ENCODE measurements at regions of chrX and their contacts with region 1.

Region 1: GRCh38 chrX:24169211-24169610 is 19.7 kb downstream of the ZFX start:
- DNase-seq: no peak
- ATAC-seq: peak; percentile 90
- H3K4me3 Mint-ChIP-seq: peak overlapping the region; percentile 45
- H3K27ac Mint-ChIP-seq: peak overlapping the region; percentile 81
- H3K4me1 Mint-ChIP-seq: peaks cover 50% of the 10 kb centered on the region
- H3K27me3 Mint-ChIP-seq: no peaks in the 10 kb centered on the region
- CTCF ChIP-seq: no peak

Region 2: DNA sequence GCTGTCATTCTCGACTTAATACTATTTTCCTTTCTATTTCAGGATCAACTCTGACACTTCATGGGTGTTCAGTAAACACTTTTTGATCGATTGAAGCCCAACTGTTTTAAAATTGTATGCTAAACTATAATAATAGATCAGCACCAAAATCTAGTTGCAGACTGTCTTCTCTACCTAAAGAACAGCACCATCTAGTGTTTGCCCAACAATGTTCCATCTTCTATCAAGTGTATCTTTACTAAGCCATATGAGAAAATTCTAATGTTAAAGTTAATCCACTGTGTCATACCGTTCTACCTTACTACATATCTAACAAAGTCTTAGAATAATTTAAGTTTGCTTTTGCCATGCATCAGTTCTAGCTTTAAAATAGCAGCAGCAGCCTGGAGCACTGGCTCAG is 614.9 kb before region 1 on chrX:
- CTCF ChIA-PET with region 1: no interaction called
- POLR2A ChIA-PET with region 1: no interaction called
- intact Hi-C with region 1: no loop called
- DNase-seq: no peak
- ATAC-seq: no peak
- H3K4me3 Mint-ChIP-seq: no peak overlapping the region
- H3K27ac Mint-ChIP-seq: no peak overlapping the region
- H3K4me1 Mint-ChIP-seq: no peaks in the 10 kb centered on the region
- H3K27me3 Mint-ChIP-seq: no peaks in the 10 kb centered on the region
- CTCF ChIP-seq: no peak

Region 3: DNA sequence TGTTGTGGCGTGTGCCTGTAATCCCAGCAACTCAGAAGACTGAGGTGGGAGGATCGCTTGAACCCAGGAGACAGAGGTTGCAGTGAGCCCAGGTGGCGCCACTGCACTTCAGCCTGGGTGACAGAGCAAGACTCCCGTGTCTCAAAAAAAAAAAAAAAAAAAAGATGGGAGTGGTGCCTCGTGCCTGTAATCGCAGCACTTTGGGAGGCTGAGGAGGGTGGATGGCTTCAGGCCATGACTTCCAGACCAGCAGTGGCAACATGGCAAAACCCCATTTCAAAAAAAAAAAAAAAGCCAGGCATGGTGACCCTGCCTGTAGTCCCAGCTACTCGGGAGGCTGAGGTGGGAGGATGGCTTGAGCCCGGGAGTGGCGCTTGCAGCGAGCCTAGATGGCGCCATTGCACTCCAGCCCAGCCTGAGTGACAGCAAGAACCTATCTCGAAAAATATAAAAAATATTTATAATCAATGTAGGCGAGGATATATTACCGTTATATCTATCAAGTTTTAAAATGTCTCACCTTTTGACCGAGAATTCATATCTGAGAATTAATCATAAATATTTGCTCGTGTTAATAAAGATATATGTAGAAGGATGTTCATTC is 87.4 kb before region 1 on chrX:
- CTCF ChIA-PET with region 1: no interaction called
- POLR2A ChIA-PET with region 1: no interaction called
- intact Hi-C with region 1: loop called (anchors 5 kb)
- DNase-seq: peak; percentile 14
- ATAC-seq: peak; percentile 65
- H3K4me3 Mint-ChIP-seq: no peak overlapping the region
- H3K27ac Mint-ChIP-seq: no peak overlapping the region
- H3K4me1 Mint-ChIP-seq: peaks cover 3% of the 10 kb centered on the region
- H3K27me3 Mint-ChIP-seq: no peaks in the 10 kb centered on the region
- CTCF ChIP-seq: no peak

Region 4: GRCh38 chrX:24110069-24110468 is 59.1 kb before region 1 on chrX:
- CTCF ChIA-PET with region 1: no interaction called
- POLR2A ChIA-PET with region 1: no interaction called
- intact Hi-C with region 1: no loop called
- DNase-seq: no peak
- ATAC-seq: no peak
- H3K4me3 Mint-ChIP-seq: no peak overlapping the region
- H3K27ac Mint-ChIP-seq: no peak overlapping the region
- H3K4me1 Mint-ChIP-seq: no peaks in the 10 kb centered on the region
- H3K27me3 Mint-ChIP-seq: no peaks in the 10 kb centered on the region
- CTCF ChIP-seq: no peak

Region 5: GRCh38 chrX:24204331-24204730 is 35.1 kb after region 1 on chrX:
- CTCF ChIA-PET with region 1: no interaction called
- POLR2A ChIA-PET with region 1: no interaction called
- intact Hi-C with region 1: loop called (anchors 5 kb)
- DNase-seq: no peak
- ATAC-seq: no peak
- H3K4me3 Mint-ChIP-seq: no peak overlapping the region
- H3K27ac Mint-ChIP-seq: peak overlapping the region; percentile 74
- H3K4me1 Mint-ChIP-seq: peaks cover 33% of the 10 kb centered on the region
- H3K27me3 Mint-ChIP-seq: no peaks in the 10 kb centered on the region
- CTCF ChIP-seq: no peak

Region 6: GRCh38 chrX:24229976-24230375 is 60.8 kb after region 1 on chrX:
- CTCF ChIA-PET with region 1: no interaction called
- POLR2A ChIA-PET with region 1: no interaction called
- intact Hi-C with region 1: loop called (anchors 10 kb)
- DNase-seq: no peak
- ATAC-seq: no peak
- H3K4me3 Mint-ChIP-seq: no peak overlapping the region
- H3K27ac Mint-ChIP-seq: no peak overlapping the region
- H3K4me1 Mint-ChIP-seq: no peaks in the 10 kb centered on the region
- H3K27me3 Mint-ChIP-seq: no peaks in the 10 kb centered on the region
- CTCF ChIP-seq: no peak